Ascending aorta (tissue), 2 donors: ENCODE measurements at regions of chr2 and their contacts with region 1.

Region 1: DNA sequence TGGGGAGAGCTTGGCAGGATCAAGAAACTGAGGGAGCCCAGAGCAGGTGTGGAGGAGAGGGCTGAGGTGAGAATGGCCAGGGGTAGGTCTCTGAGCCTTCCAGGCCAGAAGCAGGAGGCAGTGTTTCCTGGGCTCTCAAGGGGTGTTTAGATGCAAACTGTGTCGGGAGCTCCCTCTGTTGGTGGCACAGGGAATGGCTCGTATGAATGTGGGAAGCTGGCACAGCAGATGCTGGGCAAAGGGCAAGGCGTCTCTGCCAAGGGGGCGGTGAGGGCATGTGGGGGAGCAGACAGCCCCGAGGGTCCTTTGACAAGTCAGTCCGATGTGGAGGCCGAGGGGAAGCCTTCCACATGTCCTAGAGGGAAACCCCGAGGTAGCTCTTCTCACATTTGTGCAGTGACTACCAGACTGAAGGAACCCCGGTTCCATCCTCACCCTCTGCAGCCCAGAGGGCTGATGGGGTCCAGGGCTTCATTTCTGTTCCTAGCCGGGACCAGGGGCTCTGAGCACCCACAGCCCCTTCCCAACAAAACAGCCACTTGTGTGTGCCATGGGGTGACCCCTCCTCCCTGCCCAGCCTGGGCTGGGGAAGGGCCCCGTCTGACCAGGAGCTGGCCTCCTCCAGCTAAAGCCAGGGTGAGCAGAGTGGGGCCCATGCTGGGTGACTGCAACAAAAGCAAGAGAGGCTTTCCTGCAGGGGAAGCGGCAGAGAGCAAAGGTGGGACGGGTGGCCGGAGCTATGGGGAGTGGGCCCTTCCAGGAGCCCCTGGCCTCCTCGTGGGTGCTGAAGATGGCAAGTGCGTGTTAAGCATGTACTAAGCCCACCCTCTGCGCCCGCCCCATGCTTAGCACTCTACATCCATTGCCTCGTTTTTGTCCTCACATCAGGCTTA is 103.4 kb downstream of the SEPTIN10 start:
- DNase-seq: peak; percentile 37 to 92
- H3K4me3 ChIP-seq: no peak overlapping the region
- H3K27ac ChIP-seq: no peak overlapping the region
- H3K4me1 ChIP-seq: peaks cover 7 to 15% of the 10 kb centered on the region in 2 donors
- H3K27me3 ChIP-seq: no peaks in the 10 kb centered on the region
- CTCF ChIP-seq: peak; percentile 89 to 94 (median 93)

Region 2: DNA sequence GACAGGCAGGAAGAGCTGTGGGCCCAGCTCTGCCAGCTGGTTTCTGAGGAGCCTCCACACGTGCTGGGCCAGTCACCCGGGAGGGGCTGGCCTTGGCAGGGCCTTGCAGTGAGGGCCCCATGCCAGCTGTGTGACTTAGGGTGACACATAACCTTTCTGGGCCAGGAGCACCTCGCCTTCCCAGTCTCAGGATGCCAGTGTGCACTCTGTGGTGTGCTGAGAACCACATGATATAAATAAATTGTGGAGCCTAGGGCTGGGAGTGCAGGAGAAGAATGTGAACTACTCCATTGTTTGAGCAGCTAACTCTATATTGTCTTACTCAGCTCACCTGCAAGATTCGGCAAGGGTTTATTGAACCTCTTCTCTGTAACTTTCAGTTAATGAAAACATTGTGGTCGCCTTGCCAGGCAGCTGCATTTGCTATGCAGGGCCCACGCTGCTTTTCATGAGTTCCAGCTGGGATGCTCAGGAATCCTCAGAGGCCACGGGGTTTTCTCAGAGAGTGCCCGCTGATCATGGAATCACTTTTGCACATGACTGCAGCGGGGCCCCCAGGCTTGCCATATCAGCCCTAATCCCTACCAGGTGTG is 159.1 kb before region 1 on chr2:
- intact Hi-C with region 1: loop called (anchors 5 kb)
- DNase-seq: peak; percentile 58 to 90
- H3K4me3 ChIP-seq: no peak overlapping the region
- H3K27ac ChIP-seq: peak overlapping the region; percentile 66 to 76
- H3K4me1 ChIP-seq: peaks cover 13 to 40% of the 10 kb centered on the region in 2 donors
- H3K27me3 ChIP-seq: no peaks in the 10 kb centered on the region
- CTCF ChIP-seq: no peak

Region 3: DNA sequence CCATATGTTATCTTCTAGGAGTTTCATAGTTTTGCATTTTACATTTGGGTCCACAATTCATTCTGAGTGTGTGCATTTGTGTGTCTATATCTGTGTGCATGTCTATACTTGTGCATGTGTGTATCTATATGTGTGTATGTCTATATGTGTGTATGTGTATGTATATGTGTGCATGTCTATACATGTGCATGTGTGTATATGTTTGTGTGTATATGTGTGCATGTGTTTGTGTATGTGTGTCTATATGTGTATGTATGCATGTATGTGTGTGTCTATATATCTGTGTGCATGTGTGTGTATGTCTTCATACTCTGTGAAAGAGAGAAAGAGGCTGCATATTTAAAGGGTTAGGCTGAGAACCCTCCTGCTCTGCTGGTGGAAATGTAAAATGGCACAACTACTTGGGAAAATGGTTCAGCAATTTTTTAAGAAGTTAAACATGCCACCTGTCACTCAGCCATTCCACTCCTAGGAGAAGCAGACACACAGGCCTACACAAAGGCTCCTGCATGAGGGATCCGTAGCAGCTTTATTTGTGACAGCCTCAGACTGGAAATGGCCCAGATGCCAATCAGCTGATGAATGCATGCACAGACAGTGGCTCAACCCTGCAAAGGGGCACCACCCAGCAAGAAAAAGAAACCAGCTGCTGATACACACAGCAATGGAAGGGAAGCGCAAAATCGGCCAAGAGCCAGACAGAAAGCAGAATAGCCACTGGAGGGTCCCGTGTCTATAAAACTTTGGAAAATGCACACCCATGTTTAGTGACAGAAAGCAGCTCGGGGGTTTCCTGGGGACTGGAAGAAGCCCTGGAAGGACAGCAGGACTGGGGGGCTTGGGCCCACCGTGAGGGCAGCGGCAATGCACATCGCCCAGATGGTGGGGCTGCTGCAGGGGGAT is 43.5 kb before region 1 on chr2:
- intact Hi-C with region 1: no loop called
- DNase-seq: peak in 1 of 2 donors; percentile 66
- H3K4me3 ChIP-seq: no peak overlapping the region
- H3K27ac ChIP-seq: no peak overlapping the region
- H3K4me1 ChIP-seq: peaks cover 3 to 5% of the 10 kb centered on the region in 2 donors
- H3K27me3 ChIP-seq: no peaks in the 10 kb centered on the region
- CTCF ChIP-seq: no peak